Adrenal gland (tissue), 19 donors: ENCODE measurements at regions of chr9 and their contacts with region 1.

Region 1: GRCh38 chr9:12884737-12885414 is 110.1 kb downstream of the LURAP1L start:
- DNase-seq: peak in 4 of 7 donors; percentile 9 to 22 (median 18)
- H3K4me3 ChIP-seq: no peak overlapping the region
- H3K27ac ChIP-seq: no peak overlapping the region
- H3K4me1 ChIP-seq: no peaks in the 10 kb centered on the region
- H3K27me3 ChIP-seq: no peaks in the 10 kb centered on the region
- CTCF ChIP-seq: peak; percentile 38 to 89 (median 62)
- POLR2A ChIP-seq: no peak

Region 2: GRCh38 chr9:12723409-12724028 is 161.4 kb before region 1 on chr9:
- intact Hi-C with region 1: loop called (anchors 5 kb)
- DNase-seq: no peak
- H3K4me3 ChIP-seq: no peak overlapping the region
- H3K27ac ChIP-seq: no peak overlapping the region
- H3K4me1 ChIP-seq: no peaks in the 10 kb centered on the region
- H3K27me3 ChIP-seq: no peaks in the 10 kb centered on the region
- CTCF ChIP-seq: peak in 5 of 6 experiments; percentile 24 to 67 (median 54)
- POLR2A ChIP-seq: no peak

Region 3: GRCh38 chr9:12775679-12776512 is 109.0 kb before region 1 on chr9:
- intact Hi-C with region 1: loop called in 1 of 2 experiments (anchors 5 kb)
- DNase-seq: peak; percentile 26 to 64 (median 42)
- H3K4me3 ChIP-seq: peak overlapping the region; percentile 2 to 76 (median 28)
- H3K27ac ChIP-seq: peak overlapping the region; percentile 64 to 93 (median 79)
- H3K4me1 ChIP-seq: peaks cover 0 to 4% of the 10 kb centered on the region in 2 donors
- H3K27me3 ChIP-seq: no peaks in the 10 kb centered on the region
- CTCF ChIP-seq: peak in 5 of 6 experiments; percentile 46 to 66 (median 60)
- POLR2A ChIP-seq: peak in 1 of 2 donors; percentile 66